SK-N-SH (cell line): ENCODE measurements at regions of chr10 and their contacts with region 1.

Region 1: GRCh38 chr10:47024399-47025252 is 113.4 kb downstream of the PTPN20 start:
- DNase-seq: peak; percentile 83
- H3K4me3 ChIP-seq: no peak overlapping the region
- H3K27ac ChIP-seq: peak overlapping the region in 1 of 2 experiments; percentile 84; a peak in 2 of 4 replicates
- H3K4me1 ChIP-seq: peaks cover 0 to 46% of the 10 kb centered on the region in 2 experiments; a peak in 1 of 4 replicates
- H3K27me3 ChIP-seq: no peaks in the 10 kb centered on the region
- CTCF ChIP-seq: peak; percentile 78
- EP300 ChIP-seq: no peak
- RAD21 ChIP-seq: peak; percentile 93

Region 2: DNA sequence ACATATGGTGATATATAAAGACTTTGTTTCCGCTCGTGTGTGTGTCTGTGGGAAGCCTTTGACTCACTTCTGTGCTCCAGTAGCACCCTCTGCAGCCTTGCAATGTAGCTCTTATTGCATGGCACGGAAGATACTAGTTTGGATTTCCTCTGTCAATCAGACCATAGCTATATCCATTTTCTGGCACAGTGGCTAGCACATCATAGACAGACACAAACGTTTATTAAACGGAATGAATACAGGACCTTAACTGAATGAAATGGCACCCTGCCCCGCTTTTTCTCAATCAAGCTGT is 237.4 kb before region 1 on chr10:
- CTCF ChIA-PET with region 1: no interaction called
- POLR2A ChIA-PET with region 1: no interaction called
- DNase-seq: peak; percentile 21
- H3K4me3 ChIP-seq: peak overlapping the region; percentile 65 to 69
- H3K27ac ChIP-seq: peak overlapping the region; percentile 22 to 42; a peak in 3 of 4 replicates
- H3K4me1 ChIP-seq: no peaks in the 10 kb centered on the region
- H3K27me3 ChIP-seq: no peaks in the 10 kb centered on the region
- CTCF ChIP-seq: peak; percentile 31; the same call in 1 of the 2 replicates
- EP300 ChIP-seq: no peak
- RAD21 ChIP-seq: peak; percentile 44

Region 3: DNA sequence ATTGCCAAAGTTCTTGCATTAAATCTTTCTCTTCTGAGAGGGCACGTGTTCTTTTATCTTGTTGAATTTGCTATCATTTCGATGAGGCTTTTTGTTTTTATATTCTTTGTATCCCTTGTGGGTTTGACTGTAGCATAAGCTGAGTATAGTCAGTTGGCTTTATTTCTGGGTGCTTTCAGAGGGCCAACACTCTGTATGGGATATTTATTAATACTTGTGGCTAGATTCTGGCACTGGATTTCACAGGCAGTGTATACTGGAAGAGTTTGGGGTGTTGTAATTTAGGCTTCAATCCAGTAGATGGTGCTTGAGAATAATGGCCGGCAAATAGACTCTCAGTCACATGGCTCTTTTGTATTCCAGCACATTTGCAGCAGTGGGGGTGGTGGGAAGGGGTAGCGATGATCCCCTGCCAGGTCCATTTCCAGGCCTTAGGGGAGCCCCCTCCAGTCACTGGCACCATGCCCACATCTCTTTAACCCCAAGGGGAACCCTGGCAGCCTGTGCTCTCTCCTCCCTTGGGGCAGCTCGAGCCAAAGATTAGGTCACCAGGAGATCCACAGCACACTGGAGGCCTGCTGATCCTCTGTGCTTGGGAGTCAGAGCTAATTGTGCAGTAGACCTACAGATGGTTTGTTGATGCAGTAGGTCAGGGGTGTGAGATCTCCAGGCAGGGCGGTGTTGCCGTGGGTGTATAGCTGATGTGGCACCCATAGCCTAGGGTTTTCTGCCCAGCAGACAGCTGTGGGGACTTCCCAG is 31.6 kb before region 1 on chr10:
- CTCF ChIA-PET with region 1: interaction called, 39 read pairs
- POLR2A ChIA-PET with region 1: no interaction called
- DNase-seq: peak; percentile 52
- H3K4me3 ChIP-seq: no peak overlapping the region
- H3K27ac ChIP-seq: no peak overlapping the region
- H3K4me1 ChIP-seq: no peaks in the 10 kb centered on the region; a peak in 1 of 4 replicates
- H3K27me3 ChIP-seq: no peaks in the 10 kb centered on the region
- CTCF ChIP-seq: peak; percentile 58
- EP300 ChIP-seq: no peak
- RAD21 ChIP-seq: peak; percentile 78

Region 4: DNA sequence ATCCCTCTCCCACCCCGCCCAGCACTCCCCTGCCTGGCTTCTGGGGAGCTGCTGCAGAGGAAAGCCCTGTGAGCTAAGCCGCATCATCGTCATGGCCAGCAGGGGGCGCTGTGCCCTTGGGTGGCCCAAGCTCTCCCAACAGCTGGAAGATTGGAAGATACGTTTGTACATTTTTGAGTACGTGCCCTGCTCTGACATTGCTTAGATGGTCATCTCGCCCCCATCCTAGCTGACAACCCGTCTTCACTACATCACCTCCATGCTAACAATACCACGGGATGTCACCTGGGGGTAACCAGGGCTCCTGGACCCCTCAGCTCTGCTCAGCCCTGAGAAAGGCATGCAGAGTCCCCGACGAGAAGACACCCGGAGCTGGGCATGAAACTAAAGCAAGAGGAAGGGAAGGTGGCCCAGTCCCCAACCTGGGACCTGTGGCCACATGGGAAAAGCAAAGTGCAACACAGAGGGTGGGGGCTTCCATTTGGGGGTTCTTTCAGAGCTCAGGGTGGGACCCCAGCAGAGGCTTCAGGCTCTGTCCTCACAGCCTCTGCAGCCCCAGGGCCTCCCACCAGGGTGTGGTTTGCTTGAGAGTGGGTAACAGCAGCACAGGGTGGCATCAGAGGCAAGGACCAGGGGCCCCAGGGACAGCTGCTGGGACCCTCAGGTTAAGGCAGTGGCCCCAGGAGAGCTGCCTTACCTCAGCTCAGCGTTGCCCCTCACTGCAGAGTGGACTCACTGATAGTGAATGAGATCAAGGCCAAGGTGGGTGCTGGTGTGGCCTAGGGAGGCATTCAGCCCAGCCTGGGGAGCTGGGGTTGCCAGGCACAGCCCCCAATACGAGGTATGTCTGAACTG is 23.3 kb after region 1 on chr10:
- CTCF ChIA-PET with region 1: interaction called, 100 read pairs
- POLR2A ChIA-PET with region 1: interaction called, 3 read pairs
- DNase-seq: peak; percentile 69
- H3K4me3 ChIP-seq: no peak overlapping the region; a peak in 1 of 4 replicates
- H3K27ac ChIP-seq: peak overlapping the region in 1 of 2 experiments; percentile 43; a peak in 1 of 4 replicates
- H3K4me1 ChIP-seq: peaks cover 0 to 61% of the 10 kb centered on the region in 2 experiments; a peak in 1 of 4 replicates
- H3K27me3 ChIP-seq: no peaks in the 10 kb centered on the region; the same call in 1 of the 2 replicates
- CTCF ChIP-seq: peak; percentile 71
- EP300 ChIP-seq: no peak
- RAD21 ChIP-seq: peak; percentile 74

Region 5: DNA sequence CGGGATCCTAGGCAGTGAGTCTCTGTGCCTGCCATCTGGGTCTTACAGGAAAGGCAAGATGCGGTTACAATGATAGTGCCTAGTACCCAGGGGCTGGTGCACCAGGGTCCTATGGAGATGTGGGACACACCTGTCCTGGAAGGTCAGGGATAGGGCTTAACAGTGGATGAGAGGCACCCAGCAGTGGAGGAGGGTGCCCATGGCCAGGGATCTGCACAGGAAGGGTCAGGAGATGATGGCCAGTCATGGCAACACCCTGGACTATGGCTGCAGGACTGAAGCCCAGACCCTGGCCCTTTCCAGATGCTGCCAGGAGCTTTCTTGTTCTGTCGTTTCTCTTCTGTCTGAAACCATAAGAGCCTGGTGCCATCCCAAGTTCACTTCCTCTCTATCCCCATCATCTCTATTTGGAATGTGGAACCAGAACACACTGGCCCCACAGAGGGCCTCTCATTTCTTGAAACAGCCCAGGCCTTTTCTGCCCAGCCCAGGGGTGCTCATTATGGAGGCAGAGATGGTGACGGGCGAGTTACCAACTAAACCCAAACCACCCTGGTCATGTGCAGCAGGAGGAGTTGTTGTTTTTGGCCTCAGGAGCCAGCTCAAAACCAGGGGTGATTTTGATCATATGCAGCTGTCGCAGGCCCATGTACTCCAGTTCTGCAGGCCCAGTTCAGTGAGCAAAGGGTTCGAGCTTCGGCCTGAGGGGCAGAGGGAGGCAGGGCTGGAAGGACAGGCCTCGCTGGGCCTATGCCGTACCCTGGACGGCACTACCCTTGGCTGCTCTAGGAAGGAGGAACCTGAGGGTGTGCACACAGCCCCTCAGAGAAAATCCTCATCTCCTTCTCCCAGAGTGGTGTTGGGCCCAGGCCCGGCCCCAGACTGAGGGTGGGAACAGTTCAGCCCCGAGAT is 222.8 kb after region 1 on chr10:
- CTCF ChIA-PET with region 1: interaction called, 15 read pairs
- POLR2A ChIA-PET with region 1: no interaction called
- DNase-seq: no peak
- H3K4me3 ChIP-seq: no peak overlapping the region
- H3K27ac ChIP-seq: no peak overlapping the region
- H3K4me1 ChIP-seq: peaks cover 0 to 25% of the 10 kb centered on the region in 2 experiments; a peak in 1 of 4 replicates
- H3K27me3 ChIP-seq: no peaks in the 10 kb centered on the region; the same call in 1 of the 2 replicates
- CTCF ChIP-seq: no peak
- EP300 ChIP-seq: no peak
- RAD21 ChIP-seq: no peak

Region 6: DNA sequence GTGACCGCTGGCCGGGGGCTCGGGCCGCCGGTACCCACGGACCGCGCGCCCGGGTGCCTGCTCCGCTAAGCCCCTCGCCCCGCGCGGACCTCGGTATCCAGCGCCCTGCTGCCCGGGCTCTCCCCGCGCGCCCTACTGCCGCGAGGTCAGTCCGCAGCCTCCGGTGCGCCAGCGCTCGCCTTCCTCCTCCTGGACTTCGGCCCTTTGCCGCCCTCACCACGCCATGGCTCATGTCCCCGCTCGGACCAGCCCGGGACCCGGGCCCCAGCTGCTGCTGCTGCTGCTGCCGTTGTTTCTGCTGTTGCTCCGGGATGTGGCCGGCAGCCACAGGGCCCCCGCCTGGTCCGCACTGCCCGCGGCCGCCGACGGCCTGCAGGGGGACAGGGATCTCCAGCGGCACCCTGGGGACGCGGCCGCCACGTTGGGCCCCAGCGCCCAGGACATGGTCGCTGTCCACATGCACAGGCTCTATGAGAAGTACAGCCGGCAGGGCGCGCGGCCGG is 275.9 kb after region 1 on chr10:
- CTCF ChIA-PET with region 1: interaction called, 337 read pairs
- POLR2A ChIA-PET with region 1: no interaction called
- DNase-seq: peak; percentile 73
- H3K4me3 ChIP-seq: peak overlapping the region in 1 of 2 experiments; percentile 49; a peak in 2 of 4 replicates
- H3K27ac ChIP-seq: peak overlapping the region in 1 of 2 experiments; percentile 71; a peak in 1 of 4 replicates
- H3K4me1 ChIP-seq: peaks cover 0 to 58% of the 10 kb centered on the region in 2 experiments; a peak in 1 of 4 replicates
- H3K27me3 ChIP-seq: peaks cover 43% of the 10 kb centered on the region
- CTCF ChIP-seq: no peak
- EP300 ChIP-seq: no peak
- RAD21 ChIP-seq: no peak

Region 7: GRCh38 chr10:47330804-47331203 is 306.2 kb after region 1 on chr10:
- CTCF ChIA-PET with region 1: interaction called, 17 read pairs
- POLR2A ChIA-PET with region 1: no interaction called
- DNase-seq: no peak
- H3K4me3 ChIP-seq: no peak overlapping the region
- H3K27ac ChIP-seq: no peak overlapping the region
- H3K4me1 ChIP-seq: peaks cover 0 to 8% of the 10 kb centered on the region in 2 experiments; a peak in 1 of 4 replicates
- H3K27me3 ChIP-seq: peaks cover 9% of the 10 kb centered on the region; the same call in 1 of the 2 replicates
- CTCF ChIP-seq: no peak
- EP300 ChIP-seq: no peak
- RAD21 ChIP-seq: no peak

Region 8: GRCh38 chr10:47374611-47375536 is 350.2 kb after region 1 on chr10:
- CTCF ChIA-PET with region 1: interaction called, 10 read pairs
- POLR2A ChIA-PET with region 1: no interaction called
- DNase-seq: no peak
- H3K4me3 ChIP-seq: no peak overlapping the region
- H3K27ac ChIP-seq: no peak overlapping the region
- H3K4me1 ChIP-seq: peaks cover 0 to 28% of the 10 kb centered on the region in 2 experiments; a peak in 2 of 4 replicates
- H3K27me3 ChIP-seq: no peaks in the 10 kb centered on the region
- CTCF ChIP-seq: no peak
- EP300 ChIP-seq: no peak
- RAD21 ChIP-seq: no peak